Aorta (tissue), 5 donors: ENCODE measurements at regions of chr14 and their contacts with region 1.

Region 1: GRCh38 chr14:103292426-103293374 is 41.3 kb upstream of the EIF5 start:
- DNase-seq: peak; percentile 80 to 94
- ATAC-seq: peak; percentile 89
- H3K4me3 ChIP-seq: no peak overlapping the region
- H3K27ac ChIP-seq: no peak overlapping the region
- H3K4me1 ChIP-seq: no peaks in the 10 kb centered on the region
- H3K27me3 ChIP-seq: no peaks in the 10 kb centered on the region

Region 2: DNA sequence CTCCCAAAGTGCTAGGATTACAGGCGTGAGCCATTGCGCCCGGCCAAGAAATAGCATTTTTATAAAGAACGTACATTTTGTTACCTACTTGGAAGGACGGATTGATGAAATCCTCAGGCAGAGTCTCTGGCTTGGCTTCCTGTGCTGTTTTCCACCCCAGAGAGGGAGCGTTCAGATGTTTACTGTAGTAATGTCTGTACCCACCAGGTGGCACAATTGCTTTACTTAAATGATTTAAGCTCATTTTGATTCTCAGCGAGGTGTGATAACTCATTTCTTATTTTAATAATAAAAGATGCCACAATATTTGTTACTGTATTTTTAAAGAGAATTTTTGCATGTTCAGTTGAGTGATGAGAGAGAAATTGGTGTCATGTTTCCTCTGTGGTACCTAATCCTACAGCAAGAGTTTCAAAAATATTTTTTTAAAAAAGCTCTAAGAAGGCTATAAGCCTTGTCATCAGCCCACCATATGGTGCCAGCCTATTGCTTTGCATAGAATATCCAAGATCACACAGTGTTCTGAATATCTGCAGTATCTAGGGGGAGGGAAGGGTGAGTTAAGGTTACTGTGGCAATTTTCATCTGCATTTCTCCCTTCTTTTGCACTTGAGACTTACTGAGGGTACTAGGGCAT is 598.1 kb before region 1 on chr14:
- intact Hi-C with region 1: loop called in 1 of 2 experiments (anchors 10 kb)
- DNase-seq: no peak
- ATAC-seq: peak; percentile 82
- H3K4me3 ChIP-seq: no peak overlapping the region
- H3K27ac ChIP-seq: no peak overlapping the region
- H3K4me1 ChIP-seq: peaks cover 1 to 3% of the 10 kb centered on the region in 2 donors
- H3K27me3 ChIP-seq: no peaks in the 10 kb centered on the region

Region 3: DNA sequence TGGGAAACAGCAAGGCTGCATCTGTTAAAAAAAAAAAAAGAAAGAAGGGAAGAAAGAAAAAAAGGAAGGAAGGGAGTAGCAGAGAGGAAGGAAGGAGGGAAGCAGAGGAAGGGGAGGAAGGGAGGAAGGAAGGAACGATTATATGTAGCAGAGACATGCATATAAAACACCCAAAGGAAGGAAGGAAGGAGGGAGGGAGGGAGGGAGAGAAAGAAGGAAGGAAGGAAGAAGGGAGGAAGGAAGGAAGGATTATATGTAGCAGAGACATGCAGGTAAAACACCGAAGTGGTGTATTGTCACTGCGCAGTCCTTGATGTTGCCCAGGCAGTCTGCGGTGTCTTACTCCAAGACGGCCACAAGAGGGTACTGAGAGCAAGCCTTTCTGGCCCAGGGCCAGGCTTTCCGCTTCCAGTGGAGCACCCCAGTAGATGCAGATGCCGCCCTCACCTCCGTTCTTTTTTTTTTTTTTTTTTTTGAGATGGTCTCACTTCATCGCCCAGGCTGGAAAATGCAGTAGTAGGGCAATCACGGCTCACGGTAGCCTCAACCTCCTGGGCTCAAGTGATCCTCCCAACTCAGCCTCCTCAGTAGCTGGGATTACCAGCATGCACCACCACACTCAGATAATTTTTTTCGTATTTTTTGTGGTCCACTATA is 214.5 kb before region 1 on chr14:
- intact Hi-C with region 1: loop called (anchors 5 to 10 kb)
- DNase-seq: peak; percentile 85 to 89
- ATAC-seq: peak; percentile 69
- H3K4me3 ChIP-seq: no peak overlapping the region
- H3K27ac ChIP-seq: no peak overlapping the region
- H3K4me1 ChIP-seq: no peaks in the 10 kb centered on the region
- H3K27me3 ChIP-seq: no peaks in the 10 kb centered on the region

Region 4: GRCh38 chr14:103104654-103105452 is 187.8 kb before region 1 on chr14:
- intact Hi-C with region 1: loop called (anchors 1 to 5 kb)
- DNase-seq: peak; percentile 77 to 90
- ATAC-seq: peak; percentile 86
- H3K4me3 ChIP-seq: no peak overlapping the region
- H3K27ac ChIP-seq: no peak overlapping the region
- H3K4me1 ChIP-seq: no peaks in the 10 kb centered on the region
- H3K27me3 ChIP-seq: no peaks in the 10 kb centered on the region

Region 5: GRCh38 chr14:103155013-103155412 is 137.7 kb before region 1 on chr14:
- intact Hi-C with region 1: no loop called
- DNase-seq: peak; percentile 88 to 89
- ATAC-seq: peak; percentile 71
- H3K4me3 ChIP-seq: no peak overlapping the region
- H3K27ac ChIP-seq: no peak overlapping the region
- H3K4me1 ChIP-seq: no peaks in the 10 kb centered on the region
- H3K27me3 ChIP-seq: no peaks in the 10 kb centered on the region

Region 6: DNA sequence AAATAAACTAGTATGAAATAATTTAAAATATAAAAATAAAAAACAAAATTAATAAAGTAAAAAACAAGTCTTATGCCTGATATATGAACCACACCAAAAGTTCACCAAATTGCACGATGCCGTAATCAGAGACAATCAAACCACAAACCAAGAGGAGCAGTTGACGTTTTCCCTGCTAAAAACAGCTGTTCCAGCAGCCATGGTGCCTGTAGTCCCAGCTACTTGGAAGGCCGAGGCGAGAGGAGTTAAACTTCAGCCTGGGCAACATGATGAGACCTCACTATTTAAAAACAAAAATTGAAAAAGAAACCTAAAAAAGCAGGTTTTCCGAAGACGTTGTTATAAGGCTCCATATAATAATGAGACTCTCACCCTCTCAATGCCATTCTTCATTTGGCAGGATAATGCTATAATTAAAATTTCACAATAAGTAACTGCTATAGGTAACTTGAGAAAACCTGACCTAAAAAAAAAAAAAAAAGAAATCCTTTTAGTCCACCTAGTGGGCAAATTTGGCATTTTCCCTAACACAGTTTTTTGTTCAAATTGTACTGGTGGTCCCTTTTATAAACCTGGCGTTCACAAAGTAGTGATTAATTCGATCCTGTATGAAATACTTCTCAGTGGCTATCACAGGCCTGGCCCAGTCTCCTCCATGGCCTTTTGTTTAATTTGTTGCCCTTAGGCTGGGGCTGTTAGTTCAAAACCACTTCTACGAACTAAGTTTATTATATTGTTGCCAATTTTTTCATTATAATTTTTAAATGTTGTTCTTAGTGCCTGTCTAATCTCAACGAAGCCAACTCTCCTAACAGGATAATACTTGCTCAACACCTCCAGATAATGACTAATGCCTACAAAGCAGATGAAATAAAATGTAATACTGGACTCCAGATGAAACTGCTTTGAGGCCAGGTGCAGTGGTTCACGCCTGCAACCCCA is 107.4 kb before region 1 on chr14:
- intact Hi-C with region 1: loop called in 1 of 2 experiments (anchors 10 kb)
- DNase-seq: no peak
- ATAC-seq: no peak
- H3K4me3 ChIP-seq: no peak overlapping the region
- H3K27ac ChIP-seq: no peak overlapping the region
- H3K4me1 ChIP-seq: no peaks in the 10 kb centered on the region
- H3K27me3 ChIP-seq: no peaks in the 10 kb centered on the region

Region 7: GRCh38 chr14:103232298-103232808 is 60.3 kb before region 1 on chr14:
- intact Hi-C with region 1: no loop called
- DNase-seq: no peak
- ATAC-seq: peak; percentile 26
- H3K4me3 ChIP-seq: no peak overlapping the region
- H3K27ac ChIP-seq: no peak overlapping the region
- H3K4me1 ChIP-seq: no peaks in the 10 kb centered on the region
- H3K27me3 ChIP-seq: no peaks in the 10 kb centered on the region